PC-9 (cell line): ENCODE measurements at regions of chr7 and their contacts with region 1.

Region 1: GRCh38 chr7:20647908-20648776 is 32.7 kb downstream of the ABCB5 start:
- DNase-seq: peak in 1 of 2 experiments; percentile 35
- H3K4me3 ChIP-seq: no peak overlapping the region
- H3K27ac ChIP-seq: no peak overlapping the region
- H3K4me1 ChIP-seq: no peaks in the 10 kb centered on the region
- H3K27me3 ChIP-seq: no peaks in the 10 kb centered on the region
- CTCF ChIP-seq: peak; percentile 69

Region 2: GRCh38 chr7:19713676-19714075 is 934.5 kb before region 1 on chr7:
- CTCF ChIA-PET with region 1: interaction called, 4 read pairs
- POLR2A ChIA-PET with region 1: no interaction called
- intact Hi-C with region 1: loop called (anchors 1 kb)
- DNase-seq: peak; percentile 37 to 57
- H3K4me3 ChIP-seq: no peak overlapping the region
- H3K27ac ChIP-seq: no peak overlapping the region
- H3K4me1 ChIP-seq: no peaks in the 10 kb centered on the region
- H3K27me3 ChIP-seq: no peaks in the 10 kb centered on the region
- CTCF ChIP-seq: peak; percentile 81

Region 3: DNA sequence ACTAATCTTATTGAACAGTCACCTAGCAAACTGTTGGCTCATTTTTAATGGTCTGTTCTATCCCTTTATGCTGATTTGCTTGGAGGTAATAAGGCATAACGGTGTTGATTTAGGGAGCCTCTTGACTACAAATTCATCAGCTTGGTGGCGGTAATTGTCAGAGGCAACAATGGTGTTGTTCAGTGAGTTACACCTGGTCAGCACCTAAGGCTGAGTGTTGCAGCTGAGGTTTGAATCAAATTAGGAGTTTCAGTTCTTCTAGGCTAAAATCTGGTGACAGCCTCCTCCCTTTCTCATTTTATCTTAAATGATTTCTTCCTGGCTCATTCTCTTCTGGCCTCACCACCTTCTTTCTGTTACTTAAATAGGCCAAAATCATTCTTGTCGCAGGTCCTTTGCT is 180.8 kb after region 1 on chr7:
- CTCF ChIA-PET with region 1: no interaction called
- POLR2A ChIA-PET with region 1: no interaction called
- intact Hi-C with region 1: no loop called
- DNase-seq: no peak
- H3K4me3 ChIP-seq: no peak overlapping the region
- H3K27ac ChIP-seq: no peak overlapping the region
- H3K4me1 ChIP-seq: no peaks in the 10 kb centered on the region
- H3K27me3 ChIP-seq: no peaks in the 10 kb centered on the region
- CTCF ChIP-seq: no peak